ENCODE measurements at regions of chr6 and their contacts with region 1.

Region 1: GRCh38 chr6:7292596-7293255 is 20.3 kb downstream of the SSR1 start:
- DNase-seq: no peak
- ATAC-seq: no peak
- H3K4me3 ChIP-seq: no peak overlapping the region
- H3K27ac ChIP-seq: no peak overlapping the region
- H3K4me1 ChIP-seq: no peaks in the 10 kb centered on the region
- H3K27me3 ChIP-seq: no peaks in the 10 kb centered on the region
- CTCF ChIP-seq: no peak

Region 2: GRCh38 chr6:5645328-5646290 is 1647.1 kb before region 1 on chr6:
- CTCF ChIA-PET with region 1: no interaction called
- POLR2A ChIA-PET with region 1: interaction called, 13 read pairs
- intact Hi-C with region 1: no loop called
- DNase-seq: no peak
- ATAC-seq: no peak
- H3K4me3 ChIP-seq: no peak overlapping the region
- H3K27ac ChIP-seq: no peak overlapping the region
- H3K4me1 ChIP-seq: peaks cover 12% of the 10 kb centered on the region
- H3K27me3 ChIP-seq: no peaks in the 10 kb centered on the region
- CTCF ChIP-seq: no peak

Region 3: DNA sequence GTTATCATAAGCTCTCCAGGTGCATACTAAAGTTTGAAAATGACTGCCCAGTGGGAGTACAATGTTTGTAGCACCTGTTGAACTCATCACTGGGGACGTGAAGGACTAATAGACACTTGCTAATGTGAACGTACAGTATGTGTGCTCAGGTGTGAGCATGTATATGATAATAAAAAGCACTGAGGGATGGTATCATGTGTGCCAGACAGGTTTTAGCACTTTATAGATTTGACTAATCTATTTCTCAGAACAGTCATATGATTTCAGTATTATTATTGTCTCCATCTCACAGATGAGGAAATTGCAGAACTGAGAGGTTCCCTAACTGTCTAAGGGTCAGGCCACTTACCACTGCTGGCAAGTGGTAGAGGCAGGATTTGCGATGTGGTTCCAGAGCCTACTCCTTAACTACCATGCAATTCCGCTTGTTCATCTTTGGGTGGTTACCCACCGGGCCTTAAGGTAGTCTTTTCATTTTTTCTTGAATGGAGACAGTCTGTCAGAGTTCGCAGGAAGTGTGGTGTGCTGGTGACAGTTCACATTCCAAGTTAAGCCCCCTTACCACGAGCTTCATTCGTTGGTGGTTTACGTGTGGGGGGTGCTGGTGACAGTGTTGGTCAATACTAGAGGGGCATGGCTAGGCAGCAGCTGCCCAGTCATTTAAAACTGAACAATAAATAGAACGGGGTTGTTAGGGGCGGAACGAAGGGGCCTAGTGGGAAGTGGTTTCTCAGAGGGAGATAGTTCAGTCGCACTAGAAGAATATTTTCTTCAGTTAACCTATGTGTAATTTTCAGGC is 138.2 kb before region 1 on chr6:
- CTCF ChIA-PET with region 1: no interaction called
- POLR2A ChIA-PET with region 1: no interaction called
- intact Hi-C with region 1: no loop called
- DNase-seq: no peak
- ATAC-seq: no peak
- H3K4me3 ChIP-seq: no peak overlapping the region
- H3K27ac ChIP-seq: no peak overlapping the region
- H3K4me1 ChIP-seq: peaks cover 30% of the 10 kb centered on the region
- H3K27me3 ChIP-seq: no peaks in the 10 kb centered on the region
- CTCF ChIP-seq: no peak

Region 4: GRCh38 chr6:7401075-7401474 is 108.3 kb after region 1 on chr6:
- CTCF ChIA-PET with region 1: no interaction called
- POLR2A ChIA-PET with region 1: no interaction called
- intact Hi-C with region 1: no loop called
- DNase-seq: peak; percentile 86
- ATAC-seq: peak; percentile 100
- H3K4me3 ChIP-seq: no peak overlapping the region; the same call in 1 of the 2 replicates
- H3K27ac ChIP-seq: peak overlapping the region; percentile 43
- H3K4me1 ChIP-seq: peaks cover 16% of the 10 kb centered on the region
- H3K27me3 ChIP-seq: no peaks in the 10 kb centered on the region
- CTCF ChIP-seq: no peak

Measured in PC-3 (cell line).